Calu3 (cell line): ENCODE measurements at regions of chr15 and their contacts with region 1.

Region 1: GRCh38 chr15:50315814-50316630 is 39.0 kb downstream of the GABPB1 start:
- DNase-seq: peak; percentile 5
- H3K4me3 Mint-ChIP-seq: no peak overlapping the region
- H3K27ac Mint-ChIP-seq: no peak overlapping the region
- H3K4me1 Mint-ChIP-seq: peaks cover 9% of the 10 kb centered on the region
- H3K27me3 Mint-ChIP-seq: no peaks in the 10 kb centered on the region
- CTCF ChIP-seq: no peak

Region 2: GRCh38 chr15:49946692-49947091 is 369.3 kb before region 1 on chr15:
- CTCF ChIA-PET with region 1: no interaction called
- intact Hi-C with region 1: no loop called
- DNase-seq: no peak
- H3K4me3 Mint-ChIP-seq: no peak overlapping the region
- H3K27ac Mint-ChIP-seq: no peak overlapping the region
- H3K4me1 Mint-ChIP-seq: no peaks in the 10 kb centered on the region
- H3K27me3 Mint-ChIP-seq: peaks cover under 1% of the 10 kb centered on the region
- CTCF ChIP-seq: no peak

Region 3: GRCh38 chr15:50024281-50024680 is 291.7 kb before region 1 on chr15:
- CTCF ChIA-PET with region 1: no interaction called
- intact Hi-C with region 1: loop called (anchors 10 kb)
- DNase-seq: no peak
- H3K4me3 Mint-ChIP-seq: no peak overlapping the region
- H3K27ac Mint-ChIP-seq: no peak overlapping the region
- H3K4me1 Mint-ChIP-seq: no peaks in the 10 kb centered on the region
- H3K27me3 Mint-ChIP-seq: peaks cover 28% of the 10 kb centered on the region
- CTCF ChIP-seq: no peak

Region 4: DNA sequence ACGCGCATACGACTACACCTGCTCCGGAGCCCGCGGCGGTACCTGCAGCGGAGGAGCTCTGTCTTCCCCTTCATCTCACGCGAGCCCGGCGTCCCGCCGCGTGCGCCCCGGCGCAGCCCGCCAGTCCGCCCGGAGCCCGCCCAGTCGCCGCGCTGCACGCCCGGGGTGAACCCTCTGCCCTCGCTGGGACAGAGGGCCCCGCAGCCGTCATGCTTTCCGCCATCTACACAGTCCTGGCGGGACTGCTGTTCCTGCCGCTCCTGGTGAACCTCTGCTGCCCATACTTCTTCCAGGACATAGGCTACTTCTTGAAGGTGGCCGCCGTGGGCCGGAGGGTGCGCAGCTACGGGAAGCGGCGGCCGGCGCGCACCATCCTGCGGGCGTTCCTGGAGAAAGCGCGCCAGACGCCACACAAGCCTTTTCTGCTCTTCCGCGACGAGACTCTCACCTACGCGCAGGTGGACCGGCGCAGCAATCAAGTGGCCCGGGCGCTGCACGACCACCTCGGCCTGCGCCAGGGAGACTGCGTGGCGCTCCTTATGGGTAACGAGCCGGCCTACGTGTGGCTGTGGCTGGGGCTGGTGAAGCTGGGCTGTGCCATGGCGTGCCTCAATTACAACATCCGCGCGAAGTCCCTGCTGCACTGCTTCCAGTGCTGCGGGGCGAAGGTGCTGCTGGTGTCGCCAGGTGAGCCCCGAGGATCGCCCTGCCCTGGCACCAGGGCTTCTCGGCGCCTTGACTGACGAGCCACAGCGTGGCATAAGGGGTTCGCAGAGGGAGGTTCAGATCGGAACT is 133.6 kb before region 1 on chr15:
- CTCF ChIA-PET with region 1: interaction called, 11 read pairs
- intact Hi-C with region 1: loop called (anchors 10 kb)
- DNase-seq: peak; percentile 32
- H3K4me3 Mint-ChIP-seq: peak overlapping the region; percentile 97
- H3K27ac Mint-ChIP-seq: peak overlapping the region; percentile 24
- H3K4me1 Mint-ChIP-seq: peaks cover 18% of the 10 kb centered on the region
- H3K27me3 Mint-ChIP-seq: no peaks in the 10 kb centered on the region
- CTCF ChIP-seq: no peak

Region 5: DNA sequence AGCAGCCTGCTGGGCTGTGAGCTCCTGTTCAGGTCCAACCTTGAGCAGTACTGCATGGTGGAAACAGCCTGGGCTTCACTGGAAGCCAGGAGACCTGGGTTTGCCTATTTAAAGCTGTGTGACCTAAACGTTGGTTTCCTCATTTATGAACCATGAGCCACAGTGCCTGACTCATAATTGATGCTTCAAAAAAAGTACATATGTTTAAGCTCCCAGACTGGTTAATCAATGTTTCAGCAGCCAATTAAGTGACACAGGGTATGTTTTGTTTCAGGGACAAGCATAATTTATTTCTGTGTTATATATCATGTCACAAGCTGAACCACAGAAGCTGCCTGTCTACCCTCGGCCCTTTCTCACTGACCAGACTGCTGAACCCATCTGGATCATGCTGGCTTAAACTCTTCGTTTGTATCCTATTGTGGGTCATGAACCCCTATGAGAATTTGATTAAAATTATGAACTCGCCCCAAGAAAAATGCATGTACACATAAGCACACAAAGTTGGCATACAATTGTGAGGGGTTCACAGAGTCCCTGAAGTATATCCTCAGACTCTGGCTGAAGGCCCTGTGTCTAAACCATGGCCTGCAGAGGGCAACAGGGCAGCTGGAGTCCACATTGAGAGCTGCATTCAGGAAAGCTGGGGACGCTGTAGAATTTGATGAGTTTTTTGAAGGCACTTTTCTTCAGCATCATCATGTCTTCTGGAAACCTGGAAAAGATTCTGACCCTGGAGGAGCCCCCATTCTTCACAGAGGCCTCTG is 74.2 kb before region 1 on chr15:
- CTCF ChIA-PET with region 1: interaction called, 8 read pairs
- intact Hi-C with region 1: loop called (anchors 2 kb)
- DNase-seq: peak; percentile 11
- H3K4me3 Mint-ChIP-seq: no peak overlapping the region
- H3K27ac Mint-ChIP-seq: no peak overlapping the region
- H3K4me1 Mint-ChIP-seq: peaks cover 10% of the 10 kb centered on the region
- H3K27me3 Mint-ChIP-seq: no peaks in the 10 kb centered on the region
- CTCF ChIP-seq: no peak